Natural killer cell (primary cell): ENCODE measurements at regions of chr7 and their contacts with region 1.

Region 1: DNA sequence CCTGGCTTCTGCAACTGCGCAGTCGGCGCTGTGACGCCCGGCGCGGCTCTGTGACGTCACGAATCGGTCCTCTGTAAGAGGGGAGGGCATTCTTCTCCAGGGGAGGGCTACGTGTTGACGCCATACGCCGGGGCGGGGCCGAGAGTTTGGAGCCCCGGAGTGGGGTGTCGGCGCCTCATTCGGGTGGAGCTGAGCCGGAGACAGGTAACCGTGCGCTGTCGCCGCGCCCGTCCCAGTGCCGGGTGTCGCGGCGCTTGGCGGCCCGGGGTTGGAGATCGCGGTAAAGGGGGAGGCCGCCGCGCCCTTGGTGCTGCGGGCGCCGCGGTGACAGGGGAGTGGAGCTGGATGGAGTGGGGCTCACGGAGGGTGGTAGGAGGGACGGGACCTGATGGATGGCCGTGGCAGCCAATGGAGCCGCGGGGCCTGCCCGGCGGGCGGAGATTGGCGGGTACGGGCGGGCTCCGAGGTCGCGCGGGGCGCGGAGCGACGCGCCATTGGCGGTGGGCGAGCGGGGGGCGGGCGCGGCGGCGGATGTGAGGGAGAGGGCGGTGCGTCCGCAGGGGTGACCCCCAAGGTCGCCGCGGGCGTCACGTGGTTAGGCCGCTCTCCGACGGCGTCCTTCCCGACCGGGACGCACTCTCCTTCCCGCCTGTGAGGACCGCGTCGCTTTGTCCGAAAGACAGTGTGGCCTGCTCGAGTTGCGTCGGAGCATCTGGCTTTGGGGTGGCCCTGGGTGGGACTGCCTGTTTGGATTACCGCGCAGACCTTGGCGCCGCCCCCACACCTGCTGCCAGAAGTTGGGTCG is at the start of gene OGDH:
- DNase-seq: peak; percentile 99 to 100
- ATAC-seq: peak; percentile 90 to 98 (median 92)
- H3K4me3 ChIP-seq: peak within 1 kb of the TSS; percentile 86
- H3K4me3 Mint-ChIP-seq: peak within 1 kb of the TSS; percentile 99
- H3K27ac ChIP-seq: peak within 1 kb of the TSS; percentile 92
- H3K27ac Mint-ChIP-seq: peak within 1 kb of the TSS; percentile 99 to 100
- H3K4me1 ChIP-seq: peaks cover 28% of the 10 kb centered on the region
- H3K4me1 Mint-ChIP-seq: peaks cover 27 to 35% of the 10 kb centered on the region in 2 donors
- H3K27me3 ChIP-seq: no peaks in the 10 kb centered on the region
- H3K27me3 Mint-ChIP-seq: no peaks in the 10 kb centered on the region
- CTCF ChIP-seq: no peak
- total RNA-seq, gene OGDH: 69.2 to 86.7 (median 81.4) TPM

Region 2: DNA sequence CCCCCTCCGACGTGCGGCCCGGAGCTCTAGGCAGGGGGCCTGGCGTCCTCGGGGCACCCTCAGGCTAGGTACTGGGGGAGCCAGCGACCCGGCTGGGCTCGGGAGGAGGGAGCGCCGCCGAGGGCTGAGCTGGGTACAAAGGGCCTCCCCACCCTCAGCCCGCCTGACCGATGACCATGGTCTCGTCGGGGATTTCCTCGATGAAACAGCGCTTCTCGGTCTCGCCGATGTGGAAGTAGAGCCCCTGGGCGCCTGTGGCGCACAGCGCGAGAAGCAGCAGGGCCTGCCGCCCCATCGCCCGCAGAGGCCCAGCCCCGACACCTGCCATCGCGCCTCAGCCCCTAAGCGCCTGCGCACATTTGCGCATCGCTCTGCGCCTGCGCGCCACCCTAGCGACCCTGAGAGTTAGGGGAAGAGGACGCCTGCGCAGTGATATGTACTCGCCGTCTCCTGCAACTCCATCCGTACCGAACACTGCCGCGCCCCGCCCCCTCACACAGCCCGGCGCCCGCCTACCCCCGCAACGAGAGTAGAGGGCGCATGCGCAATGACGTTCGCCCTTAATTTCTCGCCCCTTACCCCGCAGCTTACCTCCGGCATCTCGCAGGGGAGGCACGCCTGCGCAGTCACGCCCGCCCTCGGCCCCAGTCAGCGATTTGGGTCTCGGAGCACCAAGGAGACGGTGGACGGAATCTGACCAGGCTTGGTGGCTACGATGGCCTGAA is 24.6 kb before region 1 on chr7 and contains the start of gene TMED4:
- intact Hi-C with region 1: loop called (anchors 1 kb)
- DNase-seq: peak; percentile 100
- ATAC-seq: peak; percentile 87 to 97 (median 87)
- H3K4me3 ChIP-seq: peak within 1 kb of the TSS; percentile 75
- H3K4me3 Mint-ChIP-seq: peak within 1 kb of the TSS; percentile 91
- H3K27ac ChIP-seq: peak within 1 kb of the TSS; percentile 95
- H3K27ac Mint-ChIP-seq: peak within 1 kb of the TSS; percentile 97 to 98
- H3K4me1 ChIP-seq: peaks cover 23% of the 10 kb centered on the region
- H3K4me1 Mint-ChIP-seq: peaks cover 30 to 31% of the 10 kb centered on the region in 2 donors
- H3K27me3 ChIP-seq: no peaks in the 10 kb centered on the region
- H3K27me3 Mint-ChIP-seq: no peaks in the 10 kb centered on the region
- CTCF ChIP-seq: no peak
- total RNA-seq, gene TMED4: 93.1 to 101 (median 94.1) TPM

Region 3: DNA sequence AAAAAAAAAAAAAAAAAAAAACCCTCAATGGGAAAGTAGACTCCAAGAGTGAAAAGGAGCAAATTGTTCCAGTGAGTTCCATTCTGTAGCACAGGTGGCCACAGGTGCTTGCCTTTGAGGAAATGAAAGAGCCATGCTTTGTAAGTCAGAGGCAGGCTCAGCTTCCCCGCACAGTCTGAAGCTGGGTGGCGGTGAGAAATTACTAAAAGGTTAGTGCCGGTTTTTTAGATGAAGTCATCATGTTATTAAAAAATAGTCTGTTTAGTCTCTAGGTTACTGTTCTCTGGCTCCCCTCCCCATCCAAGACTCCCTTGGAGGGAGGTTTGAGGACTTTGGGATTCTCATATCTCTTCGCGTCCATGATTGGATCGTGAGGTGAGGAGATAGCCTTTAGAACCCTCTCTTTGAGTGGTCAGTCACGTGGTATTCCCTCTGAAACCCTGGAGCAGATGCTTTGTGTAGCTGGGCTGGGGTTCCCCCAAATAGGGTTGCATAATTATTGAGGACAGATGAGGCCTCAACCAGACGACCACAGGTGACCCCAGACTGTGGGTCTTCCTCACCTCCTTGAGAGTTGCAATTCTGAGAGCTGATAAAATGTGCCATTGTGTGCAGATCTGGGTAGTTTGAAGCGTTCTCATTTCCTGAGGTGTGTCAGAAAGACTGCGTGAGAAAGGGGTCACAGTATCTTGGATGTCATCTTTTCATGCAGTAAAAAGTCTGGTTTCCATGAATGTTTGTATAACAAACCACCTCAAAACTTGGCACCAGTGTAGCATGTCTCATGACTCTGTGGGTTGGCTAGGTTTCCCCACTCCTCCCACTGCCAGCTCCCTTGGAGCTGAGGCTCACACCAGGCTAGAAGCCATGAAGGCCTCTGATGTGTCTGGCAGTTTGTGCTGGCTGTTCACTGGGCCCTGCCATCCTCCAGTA is 26.9 kb after region 1 on chr7:
- intact Hi-C with region 1: loop called (anchors 1 kb)
- DNase-seq: peak in 1 of 2 donors; percentile 87
- ATAC-seq: peak; percentile 19 to 57 (median 43)
- H3K4me3 ChIP-seq: no peak overlapping the region
- H3K4me3 Mint-ChIP-seq: peak overlapping the region; percentile 31
- H3K27ac ChIP-seq: peak overlapping the region; percentile 86
- H3K27ac Mint-ChIP-seq: peak overlapping the region; percentile 72 to 94
- H3K4me1 ChIP-seq: peaks cover 99% of the 10 kb centered on the region
- H3K4me1 Mint-ChIP-seq: peaks cover 77 to 78% of the 10 kb centered on the region in 2 donors
- H3K27me3 ChIP-seq: no peaks in the 10 kb centered on the region
- H3K27me3 Mint-ChIP-seq: no peaks in the 10 kb centered on the region
- CTCF ChIP-seq: no peak

Region 4: DNA sequence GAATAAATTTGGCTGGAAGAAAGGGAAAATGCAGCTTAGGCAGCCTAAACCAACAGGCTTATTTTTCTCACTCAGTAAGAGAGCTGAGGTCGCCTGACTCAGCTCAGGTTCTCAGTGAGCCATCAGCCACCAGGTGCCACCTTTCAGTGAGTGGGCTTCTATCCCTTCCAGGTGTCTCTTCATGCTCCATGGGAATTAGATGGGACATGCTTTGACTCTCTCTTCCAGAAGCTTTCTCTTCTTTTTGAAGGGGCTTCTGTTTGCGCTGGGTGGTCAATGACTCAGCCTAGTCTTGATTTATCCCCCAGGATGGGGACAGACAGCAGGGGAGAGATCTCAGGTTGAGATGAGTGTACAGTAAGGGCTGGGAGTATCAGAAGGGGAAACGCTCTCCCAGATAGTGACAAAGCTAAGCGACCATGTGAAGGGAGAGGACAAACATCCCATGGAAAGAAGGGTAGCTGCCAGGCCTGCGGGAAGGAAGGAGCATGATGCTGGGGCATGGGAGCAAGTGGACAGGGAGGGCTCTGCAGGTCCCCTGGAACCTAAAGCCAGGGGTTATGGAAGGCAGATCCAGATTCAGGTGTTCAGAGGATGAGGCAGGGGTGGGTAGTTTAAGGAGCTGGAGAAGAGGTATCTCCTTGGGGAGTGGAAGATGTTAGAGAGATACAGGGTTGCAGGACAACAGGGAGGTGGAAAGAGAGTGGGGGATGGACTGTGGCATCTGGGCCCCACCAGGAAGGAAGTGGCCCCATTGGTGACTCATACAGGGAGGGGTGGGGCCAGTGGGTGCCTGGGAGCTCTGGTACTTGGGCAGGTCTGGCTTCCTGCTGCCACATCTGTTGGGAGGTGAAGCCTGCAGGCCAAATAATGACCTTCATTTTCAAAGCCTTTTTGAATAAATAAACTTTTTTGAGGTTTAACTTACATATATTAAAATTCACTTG is 32.2 kb after region 1 on chr7:
- intact Hi-C with region 1: loop called (anchors 1 kb)
- DNase-seq: peak; percentile 72 to 87
- ATAC-seq: peak; percentile 79 to 91 (median 85)
- H3K4me3 ChIP-seq: no peak overlapping the region
- H3K4me3 Mint-ChIP-seq: peak overlapping the region; percentile 90
- H3K27ac ChIP-seq: peak overlapping the region; percentile 97
- H3K27ac Mint-ChIP-seq: peak overlapping the region; percentile 94 to 96
- H3K4me1 ChIP-seq: peaks cover 68% of the 10 kb centered on the region
- H3K4me1 Mint-ChIP-seq: peaks cover 65% of the 10 kb centered on the region in 2 donors
- H3K27me3 ChIP-seq: no peaks in the 10 kb centered on the region
- H3K27me3 Mint-ChIP-seq: no peaks in the 10 kb centered on the region
- CTCF ChIP-seq: no peak

Region 5: GRCh38 chr7:44885394-44886317 is 279.0 kb after region 1 on chr7 and contains the start of gene PURB:
- intact Hi-C with region 1: loop called (anchors 1 kb)
- DNase-seq: peak; percentile 98 to 99
- ATAC-seq: peak; percentile 83 to 94 (median 86)
- H3K4me3 ChIP-seq: peak within 1 kb of the TSS; percentile 75
- H3K4me3 Mint-ChIP-seq: peak within 1 kb of the TSS; percentile 99
- H3K27ac ChIP-seq: peak within 1 kb of the TSS; percentile 97
- H3K27ac Mint-ChIP-seq: peak within 1 kb of the TSS; percentile 100
- H3K4me1 ChIP-seq: peaks cover 35% of the 10 kb centered on the region
- H3K4me1 Mint-ChIP-seq: peaks cover 34 to 45% of the 10 kb centered on the region in 2 donors
- H3K27me3 ChIP-seq: no peaks in the 10 kb centered on the region
- H3K27me3 Mint-ChIP-seq: no peaks in the 10 kb centered on the region
- CTCF ChIP-seq: no peak
- total RNA-seq, gene PURB: 28.5 to 36.0 (median 33.7) TPM

Region 6: GRCh38 chr7:45111298-45112223 is 504.9 kb after region 1 on chr7 and contains the start of gene TBRG4:
- intact Hi-C with region 1: loop called (anchors 10 kb)
- DNase-seq: peak; percentile 94 to 98
- ATAC-seq: peak; percentile 93 to 97 (median 96)
- H3K4me3 ChIP-seq: peak within 1 kb of the TSS; percentile 66
- H3K4me3 Mint-ChIP-seq: peak within 1 kb of the TSS; percentile 100
- H3K27ac ChIP-seq: peak within 1 kb of the TSS; percentile 90
- H3K27ac Mint-ChIP-seq: peak within 1 kb of the TSS; percentile 100
- H3K4me1 ChIP-seq: peaks cover 33% of the 10 kb centered on the region
- H3K4me1 Mint-ChIP-seq: peaks cover 23 to 37% of the 10 kb centered on the region in 2 donors
- H3K27me3 ChIP-seq: no peaks in the 10 kb centered on the region
- H3K27me3 Mint-ChIP-seq: peaks cover 2 to 10% of the 10 kb centered on the region in 2 donors
- CTCF ChIP-seq: no peak
- total RNA-seq, gene TBRG4: 48.6 to 56.7 (median 55.9) TPM